Caco-2 (cell line): ENCODE measurements at regions of chr2 and their contacts with region 1.

Region 1: GRCh38 chr2:64330281-64331113 is 123.5 kb upstream of the LGALSL start:
- DNase-seq: peak; percentile 75 to 80
- H3K4me3 ChIP-seq: no peak overlapping the region
- H3K4me3 Mint-ChIP-seq: peak overlapping the region; percentile 30
- H3K27ac Mint-ChIP-seq: peak overlapping the region; percentile 46
- H3K4me1 ChIP-seq: no peaks in the 10 kb centered on the region
- H3K4me1 Mint-ChIP-seq: peaks cover 11% of the 10 kb centered on the region
- H3K27me3 ChIP-seq: no peaks in the 10 kb centered on the region
- H3K27me3 Mint-ChIP-seq: no peaks in the 10 kb centered on the region
- CTCF ChIP-seq: peak; percentile 90 to 95

Region 2: GRCh38 chr2:64277101-64277849 is 53.2 kb before region 1 on chr2:
- CTCF ChIA-PET with region 1: no interaction called
- POLR2A ChIA-PET with region 1: no interaction called
- intact Hi-C with region 1: loop called (anchors 2 kb)
- DNase-seq: peak in 1 of 2 experiments; percentile 18
- H3K4me3 ChIP-seq: no peak overlapping the region
- H3K4me3 Mint-ChIP-seq: no peak overlapping the region
- H3K27ac Mint-ChIP-seq: peak overlapping the region; percentile 94
- H3K4me1 ChIP-seq: peaks cover 36% of the 10 kb centered on the region
- H3K4me1 Mint-ChIP-seq: peaks cover 49% of the 10 kb centered on the region
- H3K27me3 ChIP-seq: no peaks in the 10 kb centered on the region
- H3K27me3 Mint-ChIP-seq: no peaks in the 10 kb centered on the region
- CTCF ChIP-seq: no peak

Region 3: GRCh38 chr2:64359892-64360657 is 29.6 kb after region 1 on chr2:
- CTCF ChIA-PET with region 1: no interaction called
- POLR2A ChIA-PET with region 1: no interaction called
- intact Hi-C with region 1: no loop called
- DNase-seq: peak; percentile 43 to 60
- H3K4me3 ChIP-seq: no peak overlapping the region
- H3K4me3 Mint-ChIP-seq: no peak overlapping the region
- H3K27ac Mint-ChIP-seq: no peak overlapping the region
- H3K4me1 ChIP-seq: peaks cover 24% of the 10 kb centered on the region
- H3K4me1 Mint-ChIP-seq: peaks cover 13% of the 10 kb centered on the region
- H3K27me3 ChIP-seq: no peaks in the 10 kb centered on the region
- H3K27me3 Mint-ChIP-seq: peaks cover 5% of the 10 kb centered on the region
- CTCF ChIP-seq: no peak

Region 4: DNA sequence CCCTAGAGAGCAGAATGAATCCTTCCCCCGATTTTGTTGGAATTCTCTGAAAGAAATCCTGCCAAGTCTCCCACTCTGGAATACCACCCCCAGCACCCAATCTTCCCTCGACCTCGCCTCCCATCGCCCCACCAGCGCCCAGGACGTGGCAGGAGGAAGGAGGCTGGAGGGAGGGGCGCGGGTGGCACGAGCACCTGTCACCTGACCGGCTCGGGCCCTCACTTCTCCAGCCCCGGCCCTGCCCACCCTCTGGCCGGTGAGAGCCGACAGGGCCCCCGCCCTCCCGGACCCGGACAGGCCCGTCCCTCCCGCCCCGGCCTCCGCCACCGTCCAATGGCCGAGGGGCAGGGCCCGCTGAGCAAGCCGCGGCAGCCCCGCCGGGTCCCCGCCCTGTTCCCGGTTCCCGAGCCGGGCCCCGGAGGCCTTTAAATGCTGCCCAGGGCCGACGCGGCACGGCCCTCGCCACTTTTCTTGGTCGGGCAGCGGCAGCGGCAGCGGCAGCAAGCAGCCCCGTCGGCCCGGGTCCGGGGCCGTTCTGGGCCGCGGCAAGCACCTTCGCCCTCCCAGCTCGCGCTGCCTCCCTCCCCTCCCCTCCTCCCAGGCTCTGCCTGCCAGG is 123.4 kb after region 1 on chr2 and contains the start of gene LGALSL:
- CTCF ChIA-PET with region 1: interaction called, 5 read pairs
- POLR2A ChIA-PET with region 1: interaction called, 3 read pairs
- intact Hi-C with region 1: loop called (anchors 10 kb)
- DNase-seq: peak; percentile 93 to 94
- H3K4me3 ChIP-seq: peak within 1 kb of the TSS; percentile 80
- H3K4me3 Mint-ChIP-seq: peak within 1 kb of the TSS; percentile 94
- H3K27ac Mint-ChIP-seq: peak within 1 kb of the TSS; percentile 98
- H3K4me1 ChIP-seq: peaks cover 11% of the 10 kb centered on the region
- H3K4me1 Mint-ChIP-seq: peaks cover 13% of the 10 kb centered on the region
- H3K27me3 ChIP-seq: no peaks in the 10 kb centered on the region
- H3K27me3 Mint-ChIP-seq: no peaks in the 10 kb centered on the region
- CTCF ChIP-seq: no peak
- total RNA-seq, gene LGALSL: 36.9 and 37.2 TPM in 2 replicates

Region 5: GRCh38 chr2:64488050-64488974 is 157.8 kb after region 1 on chr2:
- CTCF ChIA-PET with region 1: interaction called, 50 read pairs
- POLR2A ChIA-PET with region 1: no interaction called
- intact Hi-C with region 1: loop called (anchors 1 kb)
- DNase-seq: peak; percentile 72 to 83
- H3K4me3 ChIP-seq: no peak overlapping the region
- H3K4me3 Mint-ChIP-seq: no peak overlapping the region
- H3K27ac Mint-ChIP-seq: no peak overlapping the region
- H3K4me1 ChIP-seq: no peaks in the 10 kb centered on the region
- H3K4me1 Mint-ChIP-seq: peaks cover 6% of the 10 kb centered on the region
- H3K27me3 ChIP-seq: no peaks in the 10 kb centered on the region
- H3K27me3 Mint-ChIP-seq: no peaks in the 10 kb centered on the region
- CTCF ChIP-seq: peak; percentile 95

Region 6: DNA sequence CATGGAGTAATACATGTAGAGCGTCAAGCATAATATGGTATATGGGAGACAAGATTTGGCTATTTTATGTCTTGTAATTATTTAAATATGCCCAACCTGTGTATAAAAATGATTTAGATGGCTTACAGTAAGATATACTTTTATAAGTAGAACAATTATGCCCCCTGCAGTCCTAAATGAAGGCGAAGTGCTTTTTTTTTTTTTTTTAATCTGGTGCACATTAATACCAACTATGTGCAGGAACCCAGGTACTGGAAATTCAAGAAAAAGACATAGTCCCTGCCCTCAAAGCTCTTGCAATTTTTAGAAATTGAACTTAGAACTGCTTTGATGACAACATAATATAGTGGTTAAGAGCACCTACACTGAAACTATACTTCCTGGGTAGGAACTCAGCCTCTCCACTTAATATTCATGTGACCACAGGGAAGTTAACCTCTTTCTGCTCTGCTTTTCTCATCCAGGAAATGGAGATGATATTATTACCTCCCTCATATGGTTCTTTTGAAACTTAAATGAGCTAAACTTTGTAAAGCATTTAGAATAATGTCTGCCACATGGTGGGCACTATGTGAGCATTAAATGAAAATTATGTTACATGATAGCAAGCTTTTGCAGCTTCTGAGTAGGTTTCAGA is 231.8 kb after region 1 on chr2:
- CTCF ChIA-PET with region 1: interaction called, 3 read pairs
- POLR2A ChIA-PET with region 1: no interaction called
- intact Hi-C with region 1: loop called (anchors 1 kb)
- DNase-seq: no peak
- H3K4me3 ChIP-seq: no peak overlapping the region
- H3K4me3 Mint-ChIP-seq: no peak overlapping the region
- H3K27ac Mint-ChIP-seq: no peak overlapping the region
- H3K4me1 ChIP-seq: no peaks in the 10 kb centered on the region
- H3K4me1 Mint-ChIP-seq: no peaks in the 10 kb centered on the region
- H3K27me3 ChIP-seq: no peaks in the 10 kb centered on the region
- H3K27me3 Mint-ChIP-seq: no peaks in the 10 kb centered on the region
- CTCF ChIP-seq: peak in 1 of 2 experiments; percentile 23

Region 7: DNA sequence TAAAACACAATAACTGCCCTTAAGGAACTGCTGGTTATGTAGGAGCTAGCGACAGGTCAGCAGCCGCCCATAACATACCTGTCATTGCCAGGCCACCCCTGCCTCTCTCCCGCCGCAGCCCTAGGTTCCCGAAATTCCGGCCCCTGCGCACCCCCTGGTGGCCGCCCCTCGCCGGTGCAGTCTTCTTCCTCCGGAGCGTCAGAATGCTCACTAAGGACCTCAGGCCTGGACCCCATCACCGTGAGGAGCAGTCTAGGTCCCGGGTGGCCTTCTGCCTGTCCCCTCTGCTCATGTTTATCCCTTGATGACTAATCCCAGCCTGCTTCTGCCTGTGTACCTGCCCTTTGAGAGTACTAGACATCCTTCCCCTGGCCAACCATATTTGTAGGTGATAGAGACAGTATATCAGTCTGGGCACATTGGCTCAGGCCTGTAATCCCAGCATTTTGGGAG is 543.0 kb after region 1 on chr2:
- CTCF ChIA-PET with region 1: no interaction called
- POLR2A ChIA-PET with region 1: no interaction called
- intact Hi-C with region 1: loop called (anchors 10 kb)
- DNase-seq: peak; percentile 78 to 91
- H3K4me3 ChIP-seq: no peak overlapping the region
- H3K4me3 Mint-ChIP-seq: no peak overlapping the region
- H3K27ac Mint-ChIP-seq: no peak overlapping the region
- H3K4me1 ChIP-seq: peaks cover 14% of the 10 kb centered on the region; the same call in 1 of the 2 replicates
- H3K4me1 Mint-ChIP-seq: peaks cover 14% of the 10 kb centered on the region
- H3K27me3 ChIP-seq: no peaks in the 10 kb centered on the region
- H3K27me3 Mint-ChIP-seq: no peaks in the 10 kb centered on the region
- CTCF ChIP-seq: peak; percentile 91 to 96